ENCODE measurements at regions of chr3 and their contacts with region 1.

Region 1: DNA sequence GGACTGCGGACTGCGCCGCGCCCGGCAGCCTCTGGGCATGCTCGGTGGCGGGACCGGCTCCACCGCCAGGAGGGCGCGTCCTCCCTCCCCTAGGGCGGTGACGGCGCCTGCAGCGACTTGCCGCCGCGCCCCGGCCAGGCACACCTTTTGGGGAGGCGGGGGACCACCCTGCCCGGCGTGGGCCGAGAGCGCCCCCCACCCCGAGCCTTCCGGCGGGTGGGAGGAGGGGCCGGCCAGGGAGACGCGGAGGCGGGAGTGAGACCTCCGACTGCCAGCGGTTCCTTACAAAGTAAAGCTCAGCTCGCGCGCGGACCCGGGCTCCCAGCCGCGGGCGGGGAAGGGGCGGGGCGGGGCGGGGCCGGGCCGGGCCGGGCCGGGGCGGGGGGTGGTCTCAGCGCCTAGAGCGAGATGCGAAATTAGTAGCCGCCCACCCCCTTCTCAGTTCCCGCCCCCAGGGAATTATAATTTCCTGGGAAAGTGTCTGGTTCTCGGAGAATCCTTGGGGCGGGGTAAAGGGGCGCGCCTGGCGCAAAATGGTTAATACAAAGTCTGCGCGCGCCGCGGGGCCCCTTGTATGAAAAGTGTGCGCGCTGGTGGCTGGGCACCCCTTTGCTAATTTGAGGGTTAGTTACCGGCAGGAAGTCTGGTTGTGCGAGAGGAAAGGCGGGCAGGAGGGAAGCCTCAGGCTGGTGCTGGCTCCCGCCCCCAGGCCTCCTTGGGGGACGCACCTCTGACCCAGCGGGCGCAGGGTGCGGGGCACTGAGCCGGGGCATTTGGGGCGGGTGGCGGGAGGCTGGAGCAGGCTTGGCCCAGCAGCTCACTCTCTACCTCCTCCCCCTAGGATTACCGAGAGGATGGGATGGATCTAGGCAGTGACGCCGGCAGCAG is 224.8 kb upstream of the IL12A start:
- DNase-seq: peak; percentile 60 to 91
- H3K4me3 ChIP-seq: peak overlapping the region; percentile 69 to 90
- H3K27ac ChIP-seq: peak overlapping the region; percentile 92 to 98
- H3K4me1 ChIP-seq: peaks cover 0 to 50% (median 30%) of the 10 kb centered on the region in 4 donors
- H3K27me3 ChIP-seq: no peaks in the 10 kb centered on the region
- CTCF ChIP-seq: peak; percentile 44 to 65

Region 2: GRCh38 chr3:159798951-159799350 is 35.1 kb after region 1 on chr3:
- intact Hi-C with region 1: loop called (anchors 2 kb)
- DNase-seq: no peak
- H3K4me3 ChIP-seq: no peak overlapping the region
- H3K27ac ChIP-seq: peak overlapping the region; percentile 71 to 87
- H3K4me1 ChIP-seq: peaks cover 0 to 100% (median 46%) of the 10 kb centered on the region in 4 donors
- H3K27me3 ChIP-seq: no peaks in the 10 kb centered on the region
- CTCF ChIP-seq: no peak